ENCODE measurements at regions of chr2 and their contacts with region 1.

Region 1: GRCh38 chr2:226799181-226799975 is at the start of gene IRS1:
- DNase-seq: peak; percentile 82 to 91 (median 87)
- H3K4me3 ChIP-seq: peak within 1 kb of the TSS; percentile 93
- H3K27ac ChIP-seq: peak within 1 kb of the TSS; percentile 90 to 96
- H3K4me1 ChIP-seq: peaks cover 1% of the 10 kb centered on the region
- H3K27me3 ChIP-seq: no peaks in the 10 kb centered on the region
- CTCF ChIP-seq: peak in 2 of 3 donors; percentile 40 to 74
- EP300 ChIP-seq: no peak
- POLR2A ChIP-seq: no peak
- total RNA-seq, gene IRS1: 29.5 to 87.0 (median 45.1) TPM

Region 2: DNA sequence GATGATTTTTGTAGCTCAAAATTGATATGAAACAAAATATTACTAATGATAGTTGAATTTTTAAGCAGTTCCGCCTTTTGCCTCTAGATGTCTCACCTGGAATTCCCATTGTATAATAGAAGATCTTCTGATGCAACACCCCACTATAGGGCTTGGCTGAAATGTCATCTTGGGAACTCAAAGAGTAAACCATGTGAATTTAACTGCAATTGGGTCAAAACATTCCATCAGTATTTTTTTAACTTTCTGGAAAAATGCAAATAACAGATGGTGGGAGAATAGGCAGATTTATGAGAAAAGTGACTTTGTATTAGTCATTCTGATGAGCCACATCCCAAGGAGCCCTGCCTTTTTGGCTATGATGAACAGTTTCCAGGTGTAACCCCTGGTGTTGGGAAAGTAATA is 909.9 kb before region 1 on chr2:
- intact Hi-C with region 1: loop called (anchors 2 to 10 kb)
- DNase-seq: no peak
- H3K4me3 ChIP-seq: no peak overlapping the region
- H3K27ac ChIP-seq: no peak overlapping the region
- H3K4me1 ChIP-seq: peaks cover under 1% of the 10 kb centered on the region
- H3K27me3 ChIP-seq: no peaks in the 10 kb centered on the region
- CTCF ChIP-seq: peak; percentile 50 to 87 (median 82)
- EP300 ChIP-seq: no peak
- POLR2A ChIP-seq: no peak

Region 3: GRCh38 chr2:226215902-226216503 is 583.4 kb before region 1 on chr2:
- intact Hi-C with region 1: loop called in 2 of 4 experiments (anchors 5 to 10 kb)
- DNase-seq: peak; percentile 39 to 74 (median 45)
- H3K4me3 ChIP-seq: no peak overlapping the region
- H3K27ac ChIP-seq: no peak overlapping the region
- H3K4me1 ChIP-seq: peaks cover 1% of the 10 kb centered on the region
- H3K27me3 ChIP-seq: no peaks in the 10 kb centered on the region
- CTCF ChIP-seq: peak in 1 of 3 donors; percentile 42
- EP300 ChIP-seq: no peak
- POLR2A ChIP-seq: no peak

Region 4: DNA sequence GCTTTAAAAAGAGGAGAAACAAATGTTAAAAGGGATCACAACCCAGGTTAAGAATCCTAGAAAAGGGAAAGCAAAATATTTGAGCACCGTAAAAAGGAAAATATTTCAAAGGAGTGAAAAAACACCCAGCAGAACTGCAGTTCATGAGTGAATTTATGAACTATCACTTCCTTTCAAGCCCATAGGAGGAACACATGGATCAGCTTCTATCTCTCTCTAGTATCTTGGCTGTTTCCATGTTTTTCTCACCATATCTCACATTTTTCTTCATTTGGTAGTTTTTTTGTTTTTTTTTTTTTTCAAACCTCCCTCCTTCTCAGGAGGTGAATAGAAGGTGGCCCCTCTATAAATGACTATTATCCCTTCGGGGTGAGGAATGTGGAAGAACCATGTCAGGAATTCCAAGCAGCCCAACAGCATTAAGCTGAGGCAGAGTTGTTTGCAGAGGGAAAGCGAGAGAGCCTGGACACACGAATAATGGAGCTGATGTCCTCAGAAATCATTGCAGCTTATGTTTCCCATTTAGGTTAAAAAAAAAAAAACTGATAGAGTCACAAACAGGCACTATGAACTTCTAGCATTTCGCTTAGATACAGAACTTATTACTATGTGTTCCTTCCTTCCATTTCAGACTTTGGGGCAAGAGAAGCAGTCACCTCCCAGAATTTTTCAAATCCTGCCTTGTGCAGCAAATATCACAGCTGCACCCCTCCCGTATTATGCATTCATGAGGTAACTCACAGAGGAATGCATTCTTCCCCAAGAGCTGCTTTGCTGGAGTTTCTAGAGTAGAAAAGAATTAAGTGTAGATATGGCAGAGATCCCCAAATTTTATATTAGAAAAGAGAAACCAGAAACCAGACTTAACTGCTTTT is 315.4 kb before region 1 on chr2:
- intact Hi-C with region 1: loop called in 3 of 4 experiments (anchors 5 to 10 kb)
- DNase-seq: no peak
- H3K4me3 ChIP-seq: no peak overlapping the region
- H3K27ac ChIP-seq: no peak overlapping the region
- H3K4me1 ChIP-seq: no peaks in the 10 kb centered on the region
- H3K27me3 ChIP-seq: no peaks in the 10 kb centered on the region
- CTCF ChIP-seq: no peak
- EP300 ChIP-seq: no peak
- POLR2A ChIP-seq: no peak

Region 5: DNA sequence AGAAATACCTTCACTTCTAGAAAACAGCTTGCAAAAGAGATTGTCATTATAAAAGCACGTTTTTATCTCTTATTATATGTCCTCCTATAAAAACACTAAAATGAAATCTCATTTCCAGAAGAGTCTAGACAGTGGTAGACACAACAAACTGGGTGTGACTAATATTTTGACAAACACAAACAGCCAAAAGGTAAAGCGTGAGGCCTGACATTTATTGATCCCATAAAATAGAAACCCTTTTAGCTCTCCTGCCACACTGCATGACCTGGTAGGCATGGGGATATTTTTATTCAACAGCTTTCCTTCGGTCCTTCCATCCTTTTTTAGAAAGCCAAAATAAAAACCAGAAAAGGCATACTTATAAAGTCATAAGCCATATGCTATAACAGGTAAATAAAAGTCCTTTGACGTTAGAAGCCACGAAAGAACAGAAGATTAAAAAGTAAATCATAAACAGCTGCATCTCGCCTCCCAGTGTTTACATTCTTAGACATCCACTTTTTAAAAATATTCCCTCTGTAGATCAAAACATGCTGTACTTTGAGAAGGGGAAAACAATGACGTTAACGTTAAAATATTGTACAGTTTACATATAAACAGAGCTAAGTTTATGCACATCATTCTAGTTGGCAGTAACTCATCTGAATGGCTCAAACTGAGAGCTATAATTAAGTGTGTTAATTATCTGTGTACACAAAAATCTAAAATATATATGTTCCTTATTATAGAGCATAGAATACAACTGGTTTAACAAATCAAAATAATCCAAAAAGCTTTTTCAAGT is 44.4 kb before region 1 on chr2:
- intact Hi-C with region 1: loop called in 1 of 4 experiments (anchors 5 kb)
- DNase-seq: no peak
- H3K4me3 ChIP-seq: no peak overlapping the region
- H3K27ac ChIP-seq: peak overlapping the region; percentile 9 to 71
- H3K4me1 ChIP-seq: peaks cover 27% of the 10 kb centered on the region
- H3K27me3 ChIP-seq: no peaks in the 10 kb centered on the region
- CTCF ChIP-seq: peak in 1 of 3 donors; percentile 16
- EP300 ChIP-seq: no peak
- POLR2A ChIP-seq: no peak

Region 6: DNA sequence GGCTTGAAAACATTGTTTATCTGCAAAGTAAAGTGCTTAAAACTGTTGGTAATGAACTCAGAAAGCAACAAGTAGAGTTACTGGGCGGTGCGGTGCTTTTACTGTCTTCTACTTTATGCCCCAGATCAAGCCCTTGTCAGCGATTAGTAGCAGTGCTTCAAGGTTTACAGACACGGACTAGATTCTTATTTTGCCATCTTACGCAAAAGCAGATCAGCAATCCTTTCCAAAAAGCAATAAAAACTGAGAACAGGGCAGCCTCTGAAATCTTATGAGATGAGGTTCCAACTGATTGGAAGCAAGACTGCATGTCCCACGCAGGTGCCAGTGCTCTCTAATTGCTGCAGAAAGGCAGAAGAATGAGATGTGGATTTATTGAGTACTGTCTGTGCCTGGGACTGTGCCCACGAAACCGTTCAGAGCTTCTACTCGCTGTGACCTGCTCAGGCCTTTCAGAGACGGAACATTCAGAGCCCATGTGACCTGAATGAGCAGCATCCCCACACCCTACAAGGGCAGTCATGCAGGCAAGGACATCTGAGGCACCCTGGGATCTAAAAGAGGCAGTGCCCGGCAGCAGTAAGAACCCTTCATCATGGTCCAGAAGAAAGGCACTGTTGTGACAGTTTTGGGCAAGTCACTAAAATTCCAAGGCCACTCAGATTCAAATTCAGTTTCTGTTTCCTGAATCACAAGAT is 380.8 kb after region 1 on chr2:
- intact Hi-C with region 1: no loop called
- DNase-seq: peak; percentile 25 to 66 (median 42)
- H3K4me3 ChIP-seq: no peak overlapping the region
- H3K27ac ChIP-seq: peak overlapping the region in 1 of 2 donors; percentile 39
- H3K4me1 ChIP-seq: peaks cover 5% of the 10 kb centered on the region
- H3K27me3 ChIP-seq: no peaks in the 10 kb centered on the region
- CTCF ChIP-seq: no peak
- EP300 ChIP-seq: no peak
- POLR2A ChIP-seq: no peak

Measured in ovary (tissue), 10 donors.